WTC11 (cell line): ENCODE measurements at regions of chr2 and their contacts with region 1.

Region 1: GRCh38 chr2:27016801-27017325 is 15.9 kb upstream of the TMEM214 start:
- DNase-seq: peak; percentile 83
- ATAC-seq: peak; percentile 92
- H3K4me3 Mint-ChIP-seq: no peak overlapping the region
- H3K27ac Mint-ChIP-seq: no peak overlapping the region
- H3K4me1 Mint-ChIP-seq: peaks cover 12% of the 10 kb centered on the region
- H3K27me3 Mint-ChIP-seq: peaks cover 11% of the 10 kb centered on the region; the same call in 1 of the 2 replicates
- CTCF ChIP-seq: peak; percentile 71

Region 2: GRCh38 chr2:26855466-26855865 is 161.4 kb before region 1 on chr2:
- CTCF ChIA-PET with region 1: no interaction called
- POLR2A ChIA-PET with region 1: no interaction called
- DNase-seq: no peak
- ATAC-seq: no peak
- H3K4me3 Mint-ChIP-seq: no peak overlapping the region
- H3K27ac Mint-ChIP-seq: no peak overlapping the region
- H3K4me1 Mint-ChIP-seq: no peaks in the 10 kb centered on the region
- H3K27me3 Mint-ChIP-seq: peaks cover 54% of the 10 kb centered on the region
- CTCF ChIP-seq: no peak

Region 3: GRCh38 chr2:26922405-26923188 is 94.3 kb before region 1 on chr2:
- CTCF ChIA-PET with region 1: interaction called, 23 read pairs
- POLR2A ChIA-PET with region 1: no interaction called
- DNase-seq: peak; percentile 73
- ATAC-seq: peak; percentile 90
- H3K4me3 Mint-ChIP-seq: no peak overlapping the region
- H3K27ac Mint-ChIP-seq: no peak overlapping the region
- H3K4me1 Mint-ChIP-seq: peaks cover 13% of the 10 kb centered on the region
- H3K27me3 Mint-ChIP-seq: no peaks in the 10 kb centered on the region
- CTCF ChIP-seq: peak; percentile 28; the same call in 1 of the 2 replicates

Region 4: GRCh38 chr2:26952374-26952773 is 64.5 kb before region 1 on chr2:
- CTCF ChIA-PET with region 1: interaction called, 596 read pairs
- POLR2A ChIA-PET with region 1: no interaction called
- DNase-seq: no peak
- ATAC-seq: peak; percentile 39; the same call in 1 of the 2 replicates
- H3K4me3 Mint-ChIP-seq: no peak overlapping the region
- H3K27ac Mint-ChIP-seq: no peak overlapping the region
- H3K4me1 Mint-ChIP-seq: 0 out of 2 replicates have a peak, but pooled peaks cover 2% of the 10 kb centered on the region
- H3K27me3 Mint-ChIP-seq: no peaks in the 10 kb centered on the region
- CTCF ChIP-seq: no peak

Region 5: GRCh38 chr2:26976237-26976636 is 40.6 kb before region 1 on chr2:
- CTCF ChIA-PET with region 1: interaction called, 36 read pairs
- POLR2A ChIA-PET with region 1: interaction called, 3 read pairs
- DNase-seq: no peak
- ATAC-seq: no peak
- H3K4me3 Mint-ChIP-seq: no peak overlapping the region
- H3K27ac Mint-ChIP-seq: no peak overlapping the region
- H3K4me1 Mint-ChIP-seq: peaks cover 31% of the 10 kb centered on the region
- H3K27me3 Mint-ChIP-seq: peaks cover 14% of the 10 kb centered on the region
- CTCF ChIP-seq: no peak

Region 6: GRCh38 chr2:26997394-26997793 is 19.5 kb before region 1 on chr2:
- CTCF ChIA-PET with region 1: interaction called, 30 read pairs
- POLR2A ChIA-PET with region 1: no interaction called
- DNase-seq: no peak
- ATAC-seq: no peak
- H3K4me3 Mint-ChIP-seq: no peak overlapping the region
- H3K27ac Mint-ChIP-seq: no peak overlapping the region
- H3K4me1 Mint-ChIP-seq: peaks cover 6% of the 10 kb centered on the region
- H3K27me3 Mint-ChIP-seq: no peaks in the 10 kb centered on the region; the same call in 1 of the 2 replicates
- CTCF ChIP-seq: no peak

Region 7: DNA sequence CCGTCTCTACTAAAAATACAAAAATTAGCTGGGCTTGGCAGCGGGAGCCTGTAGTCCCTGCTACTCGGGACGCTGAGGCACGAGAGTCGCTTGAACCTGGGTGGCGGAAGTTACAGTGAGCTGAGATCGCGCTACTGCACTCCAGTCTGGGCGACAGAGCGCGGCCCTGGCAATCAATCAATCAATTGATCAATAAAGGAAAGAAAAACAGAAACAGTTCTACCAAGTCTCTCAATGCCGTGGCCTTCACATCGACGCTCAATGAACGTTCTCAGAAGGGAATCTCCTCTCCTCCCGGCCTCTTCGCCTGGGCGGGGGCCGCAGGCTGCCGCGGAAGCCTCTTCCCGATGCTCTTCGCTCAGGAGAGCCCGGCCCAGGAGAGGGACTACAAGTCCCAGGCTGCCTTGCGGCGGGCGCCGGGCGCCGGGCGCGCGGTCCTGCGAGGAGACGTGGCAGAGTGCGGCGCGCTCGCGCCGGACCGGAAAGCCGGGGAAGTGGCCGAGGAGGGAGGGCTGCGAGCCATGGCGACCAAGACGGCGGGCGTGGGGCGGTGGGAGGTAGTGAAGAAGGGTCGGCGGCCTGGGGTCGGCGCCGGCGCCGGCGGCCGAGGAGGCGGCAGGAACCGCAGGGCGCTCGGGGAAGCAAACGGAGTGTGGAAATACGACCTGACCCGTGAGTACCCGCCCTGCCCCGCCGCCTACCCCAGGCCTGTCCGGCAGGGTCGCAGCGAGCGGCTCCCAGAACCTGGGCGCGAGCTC is 15.8 kb after region 1 on chr2 and contains the start of gene TMEM214:
- CTCF ChIA-PET with region 1: interaction called, 47 read pairs
- POLR2A ChIA-PET with region 1: no interaction called
- DNase-seq: peak; percentile 82
- ATAC-seq: peak; percentile 94
- H3K4me3 Mint-ChIP-seq: peak within 1 kb of the TSS; percentile 95
- H3K27ac Mint-ChIP-seq: peak within 1 kb of the TSS; percentile 65
- H3K4me1 Mint-ChIP-seq: peaks cover 16% of the 10 kb centered on the region
- H3K27me3 Mint-ChIP-seq: no peaks in the 10 kb centered on the region
- CTCF ChIP-seq: no peak
- total RNA-seq, gene TMEM214: 46.4 to 57.1 TPM (median 48.9 TPM) in 3 replicates